ENCODE measurements at regions of chr3 and their contacts with region 1.

Region 1: DNA sequence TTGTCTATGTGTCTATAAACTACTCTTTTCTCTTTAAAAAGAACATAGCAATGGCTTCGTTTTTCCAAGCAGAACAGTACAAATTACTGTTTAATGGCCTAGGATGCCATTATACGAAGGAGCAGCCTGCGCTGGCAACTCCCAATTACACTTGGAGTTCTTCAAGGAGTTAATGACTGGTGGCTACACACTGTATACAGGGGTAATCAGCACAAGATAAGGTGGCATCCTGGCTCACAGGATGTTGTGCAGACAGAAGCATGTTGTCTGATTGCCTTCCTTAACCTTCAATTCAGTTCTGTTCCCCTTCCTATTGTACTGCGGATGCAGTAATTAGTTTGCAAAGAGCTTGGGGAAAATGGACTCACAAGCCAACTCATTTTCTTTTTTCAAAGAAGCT is 250.7 kb upstream of the ROBO2 start:
- DNase-seq: no peak
- ATAC-seq: no peak
- H3K4me3 ChIP-seq: no peak overlapping the region
- H3K4me3 Mint-ChIP-seq: no peak overlapping the region
- H3K27ac ChIP-seq: no peak overlapping the region
- H3K27ac Mint-ChIP-seq: no peak overlapping the region
- H3K4me1 ChIP-seq: no peaks in the 10 kb centered on the region
- H3K4me1 Mint-ChIP-seq: no peaks in the 10 kb centered on the region
- H3K27me3 ChIP-seq: no peaks in the 10 kb centered on the region
- H3K27me3 Mint-ChIP-seq: no peaks in the 10 kb centered on the region
- CTCF ChIP-seq: no peak

Region 2: DNA sequence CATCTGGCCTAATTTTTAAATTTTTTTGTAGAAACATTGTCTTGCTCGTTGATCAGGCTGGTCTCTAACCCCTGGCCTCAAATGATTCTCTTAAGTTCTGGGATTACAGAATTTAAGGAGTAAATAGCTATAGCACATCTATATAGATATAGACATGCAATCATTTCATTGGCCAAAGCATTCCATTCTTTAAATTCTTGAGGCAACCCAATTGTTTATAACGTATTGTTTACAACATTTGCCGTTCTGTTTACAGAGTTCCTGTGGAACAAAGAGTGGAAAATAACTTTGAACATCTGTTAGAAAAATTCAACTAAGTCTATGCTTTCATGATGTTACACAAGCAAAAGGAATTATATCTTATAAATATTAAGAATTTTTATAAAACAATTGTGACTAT is 45.4 kb after region 1 on chr3:
- CTCF ChIA-PET with region 1: no interaction called
- POLR2A ChIA-PET with region 1: no interaction called
- intact Hi-C with region 1: loop called in 1 of 2 experiments (anchors 10 kb)
- DNase-seq: no peak
- ATAC-seq: no peak
- H3K4me3 ChIP-seq: no peak overlapping the region
- H3K4me3 Mint-ChIP-seq: no peak overlapping the region
- H3K27ac ChIP-seq: no peak overlapping the region
- H3K27ac Mint-ChIP-seq: no peak overlapping the region
- H3K4me1 ChIP-seq: no peaks in the 10 kb centered on the region
- H3K4me1 Mint-ChIP-seq: no peaks in the 10 kb centered on the region
- H3K27me3 ChIP-seq: no peaks in the 10 kb centered on the region
- H3K27me3 Mint-ChIP-seq: no peaks in the 10 kb centered on the region
- CTCF ChIP-seq: no peak

Region 3: GRCh38 chr3:78728406-78729145 is 1939.3 kb after region 1 on chr3:
- CTCF ChIA-PET with region 1: no interaction called
- POLR2A ChIA-PET with region 1: no interaction called
- intact Hi-C with region 1: no loop called
- DNase-seq: no peak
- ATAC-seq: no peak
- H3K4me3 ChIP-seq: no peak overlapping the region
- H3K4me3 Mint-ChIP-seq: no peak overlapping the region
- H3K27ac ChIP-seq: no peak overlapping the region
- H3K27ac Mint-ChIP-seq: no peak overlapping the region
- H3K4me1 ChIP-seq: no peaks in the 10 kb centered on the region
- H3K4me1 Mint-ChIP-seq: no peaks in the 10 kb centered on the region
- H3K27me3 ChIP-seq: no peaks in the 10 kb centered on the region
- H3K27me3 Mint-ChIP-seq: no peaks in the 10 kb centered on the region
- CTCF ChIP-seq: no peak